Gastrocnemius medialis (tissue), 4 donors: ENCODE measurements at regions of chr7 and their contacts with region 1.

Region 1: GRCh38 chr7:133299676-133300075 is 46.8 kb downstream of the EXOC4 start:
- DNase-seq: no peak
- ATAC-seq: no peak
- H3K4me3 ChIP-seq: no peak overlapping the region
- H3K27ac ChIP-seq: no peak overlapping the region
- H3K4me1 ChIP-seq: peaks cover 72 to 86% of the 10 kb centered on the region in 2 donors
- H3K27me3 ChIP-seq: no peaks in the 10 kb centered on the region
- CTCF ChIP-seq: no peak
- POLR2A ChIP-seq: no peak

Region 2: GRCh38 chr7:133807624-133808492 is 508.2 kb after region 1 on chr7:
- in situ Hi-C with region 1: no loop called
- intact Hi-C with region 1: loop called (anchors 5 kb)
- DNase-seq: no peak
- ATAC-seq: no peak
- H3K4me3 ChIP-seq: no peak overlapping the region
- H3K27ac ChIP-seq: no peak overlapping the region
- H3K4me1 ChIP-seq: no peaks in the 10 kb centered on the region
- H3K27me3 ChIP-seq: no peaks in the 10 kb centered on the region
- CTCF ChIP-seq: no peak
- POLR2A ChIP-seq: no peak

Region 3: GRCh38 chr7:133846203-133846945 is 546.7 kb after region 1 on chr7:
- in situ Hi-C with region 1: no loop called
- intact Hi-C with region 1: no loop called
- DNase-seq: no peak
- ATAC-seq: no peak
- H3K4me3 ChIP-seq: no peak overlapping the region
- H3K27ac ChIP-seq: no peak overlapping the region
- H3K4me1 ChIP-seq: no peaks in the 10 kb centered on the region
- H3K27me3 ChIP-seq: no peaks in the 10 kb centered on the region
- CTCF ChIP-seq: no peak
- POLR2A ChIP-seq: no peak

Region 4: GRCh38 chr7:134174797-134175261 is 875.2 kb after region 1 on chr7:
- in situ Hi-C with region 1: no loop called
- intact Hi-C with region 1: no loop called
- DNase-seq: no peak
- ATAC-seq: peak in 1 of 2 donors; percentile 96
- H3K4me3 ChIP-seq: no peak overlapping the region
- H3K27ac ChIP-seq: no peak overlapping the region
- H3K4me1 ChIP-seq: peaks cover 0 to 6% of the 10 kb centered on the region in 2 donors
- H3K27me3 ChIP-seq: no peaks in the 10 kb centered on the region
- CTCF ChIP-seq: no peak
- POLR2A ChIP-seq: no peak